ENCODE measurements at regions of chr6 and their contacts with region 1.

Region 1: GRCh38 chr6:113858480-113859348 is 1.6 kb downstream of the MARCKS start:
- DNase-seq: peak; percentile 96
- H3K4me3 Mint-ChIP-seq: no peak overlapping the region
- H3K27ac Mint-ChIP-seq: no peak overlapping the region
- H3K4me1 Mint-ChIP-seq: no peaks in the 10 kb centered on the region
- H3K27me3 Mint-ChIP-seq: no peaks in the 10 kb centered on the region
- CTCF ChIP-seq: peak; percentile 95

Region 2: DNA sequence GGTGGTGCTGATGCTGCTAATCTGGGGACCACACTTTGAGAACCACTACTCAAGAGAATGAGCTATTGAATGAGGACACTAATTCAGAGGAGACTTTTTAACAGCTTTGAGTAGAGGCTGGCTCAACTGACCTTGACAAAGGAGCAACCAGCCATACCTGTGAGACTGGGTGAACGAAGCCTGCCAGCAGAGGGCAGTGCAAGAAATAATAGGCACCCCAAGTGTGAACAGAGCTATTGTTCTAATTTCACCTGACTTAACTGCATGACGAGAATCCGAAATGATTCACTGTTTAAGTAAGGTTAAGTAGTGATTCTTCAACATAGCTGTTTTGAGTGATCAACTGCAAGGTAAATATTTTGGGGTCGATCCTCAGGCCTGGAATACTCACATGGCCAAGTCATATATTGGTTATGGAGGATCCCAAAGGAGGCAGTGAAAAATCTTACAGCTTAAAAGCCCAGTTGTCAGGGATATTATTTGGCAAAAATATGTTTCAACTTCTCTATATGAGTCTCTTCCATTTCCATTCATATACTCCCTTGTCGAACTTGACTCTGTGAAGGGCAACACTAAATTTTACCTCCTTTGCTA is 552.1 kb before region 1 on chr6:
- CTCF ChIA-PET with region 1: interaction called, 24 read pairs
- intact Hi-C with region 1: loop called (anchors 1 kb)
- DNase-seq: peak; percentile 81
- H3K4me3 Mint-ChIP-seq: no peak overlapping the region
- H3K27ac Mint-ChIP-seq: no peak overlapping the region
- H3K4me1 Mint-ChIP-seq: no peaks in the 10 kb centered on the region
- H3K27me3 Mint-ChIP-seq: no peaks in the 10 kb centered on the region
- CTCF ChIP-seq: peak; percentile 77

Region 3: GRCh38 chr6:113414511-113414910 is 444.2 kb before region 1 on chr6:
- CTCF ChIA-PET with region 1: interaction called, 5 read pairs
- intact Hi-C with region 1: loop called (anchors 1 kb)
- DNase-seq: peak; percentile 56
- H3K4me3 Mint-ChIP-seq: no peak overlapping the region
- H3K27ac Mint-ChIP-seq: peak overlapping the region; percentile 1
- H3K4me1 Mint-ChIP-seq: peaks cover 34% of the 10 kb centered on the region
- H3K27me3 Mint-ChIP-seq: no peaks in the 10 kb centered on the region
- CTCF ChIP-seq: peak; percentile 49

Region 4: GRCh38 chr6:113654396-113654795 is 204.3 kb before region 1 on chr6:
- CTCF ChIA-PET with region 1: no interaction called
- intact Hi-C with region 1: loop called (anchors 5 kb)
- DNase-seq: peak; percentile 85
- H3K4me3 Mint-ChIP-seq: peak overlapping the region; percentile 22
- H3K27ac Mint-ChIP-seq: peak overlapping the region; percentile 68
- H3K4me1 Mint-ChIP-seq: peaks cover 20% of the 10 kb centered on the region
- H3K27me3 Mint-ChIP-seq: no peaks in the 10 kb centered on the region
- CTCF ChIP-seq: no peak

Region 5: DNA sequence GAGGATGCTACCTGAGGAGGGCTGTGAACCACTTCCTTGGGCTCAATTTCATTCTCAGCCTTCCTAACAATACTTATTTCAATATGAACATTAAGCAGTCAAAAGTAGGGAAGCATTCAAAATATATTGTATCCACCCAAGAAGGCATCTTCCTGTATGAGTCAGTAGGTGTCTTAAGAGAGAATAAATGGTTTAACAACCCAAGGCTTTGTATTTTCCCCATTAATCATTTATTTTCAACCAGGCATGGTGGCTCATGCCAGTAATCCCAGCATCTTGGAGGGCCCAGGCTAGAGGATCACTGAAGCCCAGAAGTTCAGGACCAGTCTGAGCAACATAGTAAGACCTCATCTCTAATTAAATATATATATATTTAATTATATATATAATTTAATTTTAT is 76.1 kb before region 1 on chr6:
- CTCF ChIA-PET with region 1: interaction called, 9 read pairs
- intact Hi-C with region 1: loop called (anchors 2 kb)
- DNase-seq: no peak
- H3K4me3 Mint-ChIP-seq: no peak overlapping the region
- H3K27ac Mint-ChIP-seq: no peak overlapping the region
- H3K4me1 Mint-ChIP-seq: no peaks in the 10 kb centered on the region
- H3K27me3 Mint-ChIP-seq: no peaks in the 10 kb centered on the region
- CTCF ChIP-seq: no peak

Region 6: GRCh38 chr6:113936093-113936934 is 77.6 kb after region 1 on chr6:
- CTCF ChIA-PET with region 1: no interaction called
- intact Hi-C with region 1: no loop called
- DNase-seq: peak; percentile 29
- H3K4me3 Mint-ChIP-seq: no peak overlapping the region
- H3K27ac Mint-ChIP-seq: no peak overlapping the region
- H3K4me1 Mint-ChIP-seq: no peaks in the 10 kb centered on the region
- H3K27me3 Mint-ChIP-seq: no peaks in the 10 kb centered on the region
- CTCF ChIP-seq: peak; percentile 40